Activated T-helper 1 cell treated with anti-CD3 and anti-CD28 coated beads, Interleukin-12 subunit alpha, Interleukin-12 subunit beta, Interleukin-2, Interleukin-4 antibody, amounts not matched to agents 30 ng/mL and 10 ng/mL and 1 ng/mL, durations not matched to agents 14 hours and 24 hours and 36 hours (primary cell): ENCODE measurements at regions of chr22 and their contacts with region 1.

Region 1: GRCh38 chr22:20981787-20982562 is at the start of gene LZTR1:
- DNase-seq: peak; percentile 68
- H3K4me3 Mint-ChIP-seq: peak within 1 kb of the TSS; percentile 90
- H3K27ac Mint-ChIP-seq: peak within 1 kb of the TSS; percentile 87
- H3K4me1 Mint-ChIP-seq: peaks cover 44% of the 10 kb centered on the region
- H3K27me3 Mint-ChIP-seq: no peaks in the 10 kb centered on the region
- total RNA-seq, gene LZTR1: 81.9 and 87.5 TPM in 2 replicates

Region 2: GRCh38 chr22:20858615-20859416 is 123.2 kb before region 1 on chr22 and contains the starts of genes PI4KA and SNAP29:
- intact Hi-C with region 1: loop called (anchors 2 kb)
- DNase-seq: peak; percentile 97
- H3K4me3 Mint-ChIP-seq: peak within 1 kb of the TSS; percentile 85
- H3K27ac Mint-ChIP-seq: peak within 1 kb of the TSS; percentile 88
- H3K4me1 Mint-ChIP-seq: peaks cover 51% of the 10 kb centered on the region
- H3K27me3 Mint-ChIP-seq: peaks cover 2% of the 10 kb centered on the region
- total RNA-seq, gene PI4KA: 80.4 and 84.7 TPM in 2 replicates
- total RNA-seq, gene SNAP29: 24.6 and 27.7 TPM in 2 replicates

Region 3: DNA sequence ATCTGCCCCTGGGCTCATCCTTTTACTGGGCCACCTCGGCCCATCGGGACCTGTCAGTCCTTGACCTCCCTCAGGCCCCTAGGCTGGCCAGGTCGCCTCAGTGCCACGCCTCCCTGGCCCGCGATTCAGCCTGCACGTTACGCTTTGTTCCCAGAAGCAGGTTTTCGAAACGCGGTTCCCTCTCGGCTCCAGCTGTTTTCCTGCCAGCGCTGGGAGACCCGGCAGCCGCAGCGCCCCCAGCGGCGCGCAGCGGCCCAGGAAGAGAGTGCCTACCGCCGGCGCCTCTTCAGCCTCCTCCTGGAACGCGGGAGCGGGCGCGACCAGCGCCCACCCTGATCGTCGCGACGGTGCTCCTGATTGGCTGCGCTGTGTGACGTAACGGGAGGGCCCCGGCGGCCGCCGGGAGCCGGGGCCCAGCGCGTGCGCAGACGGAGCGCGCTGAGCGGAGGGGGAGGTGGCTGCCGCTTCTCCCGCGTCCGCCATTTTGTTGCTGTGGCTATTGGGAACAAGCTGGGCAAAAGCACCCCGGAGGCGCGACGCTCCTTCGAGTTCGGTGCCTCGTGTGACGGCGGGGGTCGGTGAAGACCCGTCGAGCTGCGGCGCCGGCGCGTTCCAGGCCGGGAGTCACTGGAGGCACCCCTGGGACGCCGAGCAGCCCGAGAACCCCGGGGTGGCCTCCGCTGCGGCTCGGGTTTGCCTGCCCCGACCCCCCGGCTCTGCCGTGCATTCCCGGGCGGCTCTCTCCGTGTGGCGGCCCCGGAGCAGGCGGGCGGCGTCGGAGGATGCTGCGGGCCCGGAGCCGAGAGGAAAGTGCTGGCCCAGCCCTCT is 64.8 kb before region 1 on chr22 and contains the start of gene CRKL:
- intact Hi-C with region 1: loop called (anchors 5 kb)
- DNase-seq: peak; percentile 96
- H3K4me3 Mint-ChIP-seq: peak within 1 kb of the TSS; percentile 99
- H3K27ac Mint-ChIP-seq: peak within 1 kb of the TSS; percentile 88
- H3K4me1 Mint-ChIP-seq: peaks cover 34% of the 10 kb centered on the region
- H3K27me3 Mint-ChIP-seq: peaks cover 3% of the 10 kb centered on the region
- total RNA-seq, gene CRKL: 78.2 and 79.2 TPM in 2 replicates

Region 4: DNA sequence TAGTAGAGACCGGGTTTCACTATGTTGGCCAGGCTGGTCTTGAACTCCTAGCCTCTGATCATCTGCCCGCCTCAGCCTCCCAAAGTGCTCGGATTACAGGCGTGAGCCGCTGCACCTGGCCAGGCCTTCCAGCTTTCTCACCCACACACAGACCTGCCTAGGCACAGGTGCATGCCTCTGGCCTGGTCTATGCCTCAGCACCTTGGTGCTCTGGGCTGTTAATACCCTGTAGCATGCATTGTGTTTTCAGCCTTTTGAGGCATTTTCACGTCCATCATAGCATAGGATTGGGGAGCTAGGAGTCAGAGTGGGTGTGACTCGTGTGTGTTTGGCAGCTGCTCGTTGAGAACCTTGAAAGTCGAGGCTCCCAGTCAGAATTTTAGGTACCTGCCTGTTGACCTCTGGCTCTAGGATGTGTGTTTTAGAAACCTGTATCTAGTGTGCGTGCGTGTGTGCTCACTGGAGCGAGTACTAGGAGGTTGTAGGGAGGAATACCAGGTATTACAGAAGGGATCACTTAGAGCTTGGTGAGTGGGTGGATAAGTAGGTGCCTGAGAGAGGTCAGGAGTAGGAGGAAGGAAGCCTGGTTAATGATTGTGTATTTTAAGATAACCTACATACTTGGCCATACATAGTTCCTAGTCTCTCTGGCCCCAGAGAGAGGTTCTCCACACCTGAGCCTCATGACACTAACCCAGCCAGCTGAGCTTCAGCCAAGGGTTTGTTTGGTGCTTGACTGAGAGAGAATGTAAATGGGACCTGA is 44.8 kb before region 1 on chr22:
- intact Hi-C with region 1: no loop called
- DNase-seq: no peak
- H3K4me3 Mint-ChIP-seq: peak overlapping the region; percentile 7
- H3K27ac Mint-ChIP-seq: peak overlapping the region; percentile 10
- H3K4me1 Mint-ChIP-seq: peaks cover 60% of the 10 kb centered on the region
- H3K27me3 Mint-ChIP-seq: no peaks in the 10 kb centered on the region

Region 5: DNA sequence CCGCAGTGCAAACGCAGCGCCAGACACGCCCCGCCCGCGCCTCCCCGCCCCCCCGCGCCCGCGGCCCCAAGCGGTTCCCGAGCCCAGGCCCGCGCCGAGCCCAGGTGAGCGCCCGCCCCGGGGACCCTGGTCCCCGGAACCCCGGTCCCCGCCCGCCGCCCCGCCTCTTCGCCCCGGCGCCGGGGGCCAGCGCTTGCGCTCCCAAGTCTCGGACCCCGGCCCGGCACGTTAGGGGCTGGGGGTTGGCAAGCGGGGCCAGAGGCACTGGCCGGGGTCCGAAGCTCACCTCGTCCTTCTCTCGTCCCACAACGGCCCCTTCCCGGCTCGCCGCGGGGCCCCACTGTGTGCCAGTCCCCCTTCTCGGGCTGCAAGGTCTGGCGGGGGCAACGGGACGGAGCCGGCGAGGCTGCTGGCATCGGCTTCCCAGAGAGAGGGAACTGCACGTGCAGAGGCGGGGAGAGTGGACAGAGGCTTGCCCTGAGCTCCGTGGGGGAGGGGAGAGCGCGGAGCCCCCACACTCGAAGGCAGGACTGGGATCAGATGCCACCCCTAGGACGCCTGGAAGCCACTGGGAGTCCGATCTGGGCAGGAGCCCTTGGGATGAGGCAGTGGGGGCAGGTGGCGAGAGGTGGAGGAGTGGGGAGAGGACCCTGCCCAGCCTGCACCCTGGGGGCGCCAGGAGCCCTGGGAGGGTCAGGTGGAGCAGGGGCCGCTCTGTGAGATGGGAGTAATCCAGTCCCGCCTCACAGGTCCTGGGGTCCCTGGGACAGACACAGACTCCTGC is 16.7 kb before region 1 on chr22:
- intact Hi-C with region 1: loop called (anchors 2 kb)
- DNase-seq: no peak
- H3K4me3 Mint-ChIP-seq: no peak overlapping the region
- H3K27ac Mint-ChIP-seq: no peak overlapping the region
- H3K4me1 Mint-ChIP-seq: peaks cover 11% of the 10 kb centered on the region
- H3K27me3 Mint-ChIP-seq: peaks cover 22% of the 10 kb centered on the region

Region 6: DNA sequence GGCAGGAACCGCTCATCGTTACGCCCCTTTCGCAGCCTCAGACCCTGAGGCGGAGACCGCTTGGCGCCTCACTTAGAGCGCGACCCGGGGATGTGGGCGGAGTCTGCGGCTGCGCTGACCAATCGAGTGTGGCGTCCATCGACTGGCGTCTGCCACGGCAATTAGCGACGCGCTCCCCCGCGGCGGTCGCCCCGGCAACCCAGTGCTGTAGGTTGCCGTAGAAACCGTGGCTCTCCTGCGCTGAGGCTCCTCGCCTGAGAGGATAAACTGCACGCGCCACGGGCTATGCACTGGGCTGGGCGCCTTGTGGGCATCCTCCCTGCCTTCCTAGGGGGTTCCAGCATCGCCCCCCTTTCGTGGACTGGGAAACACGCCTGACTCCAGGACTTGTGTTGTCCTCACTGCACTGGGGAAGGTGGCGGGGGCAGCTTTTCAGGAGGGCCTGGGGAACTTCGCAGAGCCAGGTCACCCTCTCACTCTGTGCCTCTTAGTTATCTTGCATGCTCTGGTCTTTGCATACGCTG is 32.3 kb after region 1 on chr22:
- intact Hi-C with region 1: loop called (anchors 1 kb)
- DNase-seq: peak; percentile 75
- H3K4me3 Mint-ChIP-seq: peak overlapping the region; percentile 67
- H3K27ac Mint-ChIP-seq: peak overlapping the region; percentile 63
- H3K4me1 Mint-ChIP-seq: peaks cover 15% of the 10 kb centered on the region
- H3K27me3 Mint-ChIP-seq: peaks cover 5% of the 10 kb centered on the region

Region 7: GRCh38 chr22:21102659-21103267 is 120.8 kb after region 1 on chr22:
- intact Hi-C with region 1: no loop called
- DNase-seq: peak; percentile 61
- H3K4me3 Mint-ChIP-seq: no peak overlapping the region
- H3K27ac Mint-ChIP-seq: no peak overlapping the region
- H3K4me1 Mint-ChIP-seq: peaks cover 8% of the 10 kb centered on the region
- H3K27me3 Mint-ChIP-seq: peaks cover 32% of the 10 kb centered on the region